MCF 10A (cell line): ENCODE measurements at regions of chr5 and their contacts with region 1.

Region 1: DNA sequence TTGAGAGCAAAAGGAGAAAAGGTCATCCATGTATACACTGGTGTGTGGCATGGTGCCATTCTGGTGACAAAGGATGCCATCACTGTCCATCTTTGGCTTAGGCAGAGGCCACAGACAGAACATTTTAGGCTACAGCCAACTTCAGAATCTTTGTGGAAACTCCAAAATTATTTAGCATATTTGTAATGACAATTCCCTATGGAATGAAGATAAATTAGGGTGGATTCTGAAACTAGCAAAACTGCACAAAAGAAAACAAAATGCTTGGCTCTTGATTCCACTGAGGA is 92.5 kb downstream of the FBXW11 start:
- DNase-seq: no peak
- H3K4me3 Mint-ChIP-seq: no peak overlapping the region
- H3K27ac Mint-ChIP-seq: no peak overlapping the region
- H3K4me1 Mint-ChIP-seq: peaks cover 27% of the 10 kb centered on the region
- H3K27me3 Mint-ChIP-seq: no peaks in the 10 kb centered on the region
- CTCF ChIP-seq: no peak

Region 2: DNA sequence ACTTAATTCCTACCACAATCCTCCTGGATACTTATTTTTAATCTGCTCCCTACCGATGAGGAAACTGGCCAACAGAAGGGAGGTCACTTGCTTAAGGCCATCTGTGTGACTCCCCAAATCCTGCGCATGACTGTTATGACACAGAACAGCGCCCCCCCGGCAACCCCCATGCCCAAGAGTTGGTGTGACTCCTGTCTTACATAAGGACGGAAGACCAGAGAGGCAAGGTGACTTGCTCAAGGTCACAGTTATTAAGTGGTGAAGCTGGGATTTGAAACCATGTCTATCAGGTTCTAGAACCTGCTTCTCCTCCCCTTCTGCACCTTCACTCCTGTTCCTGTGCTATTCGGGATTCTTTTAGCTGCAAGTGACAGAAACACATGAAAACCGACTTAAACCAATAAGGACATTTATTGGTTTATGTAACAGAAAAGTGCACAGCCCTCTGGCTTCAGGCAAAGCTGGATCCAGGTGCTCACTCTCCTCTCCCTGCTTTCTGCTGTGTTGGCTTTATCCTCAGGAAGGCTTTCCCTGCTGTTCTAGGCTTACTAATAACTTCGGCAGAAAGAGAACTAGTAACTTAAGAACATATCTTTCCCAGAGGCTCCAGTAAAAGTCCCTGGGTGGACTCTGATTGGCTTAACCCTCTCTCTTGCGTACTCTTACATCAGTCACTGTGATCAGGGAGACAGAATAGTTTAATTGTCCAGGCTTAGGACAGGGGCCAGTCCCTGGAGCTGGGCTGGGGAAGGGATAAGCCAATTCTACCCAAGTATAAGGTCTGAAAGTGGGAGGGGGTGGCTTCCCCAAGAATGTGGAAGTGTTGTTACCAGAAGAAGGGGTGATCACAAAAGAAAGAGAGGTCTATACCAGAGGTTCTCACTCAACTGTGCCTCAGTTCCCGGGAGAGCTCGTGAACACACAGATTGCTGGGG is 450.7 kb before region 1 on chr5:
- CTCF ChIA-PET with region 1: no interaction called
- POLR2A ChIA-PET with region 1: no interaction called
- intact Hi-C with region 1: no loop called
- DNase-seq: no peak
- H3K4me3 Mint-ChIP-seq: no peak overlapping the region
- H3K27ac Mint-ChIP-seq: no peak overlapping the region
- H3K4me1 Mint-ChIP-seq: no peaks in the 10 kb centered on the region
- H3K27me3 Mint-ChIP-seq: peaks cover 36% of the 10 kb centered on the region
- CTCF ChIP-seq: no peak

Region 3: DNA sequence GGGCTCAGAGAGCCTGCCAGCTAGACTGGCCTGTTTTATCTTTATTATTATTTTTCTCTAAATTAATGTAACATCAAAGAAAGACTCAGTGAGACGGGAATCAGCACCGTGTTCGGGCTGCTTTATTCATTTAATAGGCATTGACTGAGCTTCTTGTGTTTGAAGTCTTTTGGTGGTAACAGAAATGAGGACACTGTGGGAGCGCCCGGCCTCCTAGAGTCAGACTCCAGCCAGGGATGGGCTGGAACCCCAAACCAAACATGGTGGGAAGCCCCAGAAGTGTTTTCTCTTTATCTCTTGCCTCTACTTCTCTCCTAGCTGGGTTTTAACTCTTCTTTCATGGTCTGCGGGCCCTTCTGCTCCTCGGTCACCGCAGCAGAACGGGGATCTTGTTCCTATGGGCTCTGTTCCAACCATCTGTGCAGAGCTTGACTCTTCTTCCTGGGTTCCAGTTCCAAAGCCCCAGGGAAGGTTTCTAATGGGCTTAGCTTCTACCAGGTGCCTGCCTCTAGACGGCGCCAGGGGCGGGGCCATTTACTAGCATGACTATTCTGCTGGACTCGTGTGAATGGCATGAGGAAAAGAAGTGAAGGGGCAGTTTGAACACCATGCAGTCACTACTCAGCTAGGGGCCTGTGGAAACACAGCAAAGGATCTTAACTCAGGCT is 370.6 kb before region 1 on chr5:
- CTCF ChIA-PET with region 1: no interaction called
- POLR2A ChIA-PET with region 1: no interaction called
- intact Hi-C with region 1: no loop called
- DNase-seq: no peak
- H3K4me3 Mint-ChIP-seq: no peak overlapping the region
- H3K27ac Mint-ChIP-seq: no peak overlapping the region
- H3K4me1 Mint-ChIP-seq: no peaks in the 10 kb centered on the region
- H3K27me3 Mint-ChIP-seq: no peaks in the 10 kb centered on the region
- CTCF ChIP-seq: no peak

Region 4: DNA sequence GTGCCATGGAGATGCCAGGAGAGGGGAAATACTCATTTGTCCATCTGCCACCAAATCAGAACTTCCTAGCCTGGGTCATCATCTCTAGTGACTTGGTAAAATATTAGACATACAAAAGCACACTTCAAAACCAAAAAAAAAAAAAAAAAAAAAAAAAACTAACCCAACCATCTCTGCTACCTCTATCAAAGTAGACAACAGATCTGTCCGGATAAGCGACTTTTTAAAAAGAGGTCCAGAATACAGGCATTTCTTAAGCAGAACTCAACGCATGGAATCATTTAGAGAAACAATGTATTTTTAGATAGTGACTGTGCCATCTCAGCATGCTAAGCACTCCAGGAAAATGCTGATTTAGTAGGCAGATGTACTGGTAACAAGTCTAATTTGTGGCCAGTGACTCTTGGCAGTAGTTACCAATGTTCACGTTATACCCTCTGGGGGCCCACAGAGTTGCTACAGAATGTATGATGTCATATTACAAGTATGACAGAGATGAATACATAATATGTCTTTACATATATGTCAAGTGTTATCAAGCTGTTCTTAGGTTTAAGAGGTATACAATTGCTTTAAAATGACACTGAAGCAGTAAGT is 20.5 kb before region 1 on chr5:
- CTCF ChIA-PET with region 1: interaction called, 19 read pairs
- POLR2A ChIA-PET with region 1: interaction called, 3 read pairs
- intact Hi-C with region 1: no loop called
- DNase-seq: peak; percentile 8
- H3K4me3 Mint-ChIP-seq: no peak overlapping the region
- H3K27ac Mint-ChIP-seq: peak overlapping the region; percentile 8
- H3K4me1 Mint-ChIP-seq: no peaks in the 10 kb centered on the region
- H3K27me3 Mint-ChIP-seq: no peaks in the 10 kb centered on the region
- CTCF ChIP-seq: no peak

Region 5: DNA sequence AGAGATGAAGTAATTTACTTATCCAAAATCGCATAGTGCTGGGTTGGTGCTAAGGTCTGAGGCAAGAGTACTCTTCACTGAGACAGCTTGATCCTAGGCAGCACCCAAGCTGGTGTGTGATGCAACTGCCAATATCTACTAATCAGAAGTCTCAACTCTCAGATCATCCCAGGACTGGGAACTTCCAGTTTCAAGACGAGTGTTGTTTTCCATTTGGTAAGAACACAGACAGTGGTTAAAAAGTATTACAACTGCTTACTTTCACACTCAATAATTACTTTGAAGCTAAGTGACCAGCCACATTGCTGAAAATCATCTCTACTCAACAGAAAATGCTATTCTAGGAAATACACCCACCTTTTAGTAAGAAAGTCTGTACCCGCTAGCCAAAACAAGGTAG is 47.2 kb after region 1 on chr5:
- CTCF ChIA-PET with region 1: interaction called, 10 read pairs
- POLR2A ChIA-PET with region 1: interaction called, 3 read pairs
- intact Hi-C with region 1: no loop called
- DNase-seq: no peak
- H3K4me3 Mint-ChIP-seq: no peak overlapping the region
- H3K27ac Mint-ChIP-seq: no peak overlapping the region
- H3K4me1 Mint-ChIP-seq: peaks cover 31% of the 10 kb centered on the region
- H3K27me3 Mint-ChIP-seq: no peaks in the 10 kb centered on the region
- CTCF ChIP-seq: no peak

Region 6: GRCh38 chr5:172015346-172015745 is 101.4 kb after region 1 on chr5:
- CTCF ChIA-PET with region 1: interaction called, 153 read pairs
- POLR2A ChIA-PET with region 1: no interaction called
- intact Hi-C with region 1: no loop called
- DNase-seq: no peak
- H3K4me3 Mint-ChIP-seq: no peak overlapping the region
- H3K27ac Mint-ChIP-seq: no peak overlapping the region
- H3K4me1 Mint-ChIP-seq: no peaks in the 10 kb centered on the region
- H3K27me3 Mint-ChIP-seq: no peaks in the 10 kb centered on the region
- CTCF ChIP-seq: no peak

Region 7: DNA sequence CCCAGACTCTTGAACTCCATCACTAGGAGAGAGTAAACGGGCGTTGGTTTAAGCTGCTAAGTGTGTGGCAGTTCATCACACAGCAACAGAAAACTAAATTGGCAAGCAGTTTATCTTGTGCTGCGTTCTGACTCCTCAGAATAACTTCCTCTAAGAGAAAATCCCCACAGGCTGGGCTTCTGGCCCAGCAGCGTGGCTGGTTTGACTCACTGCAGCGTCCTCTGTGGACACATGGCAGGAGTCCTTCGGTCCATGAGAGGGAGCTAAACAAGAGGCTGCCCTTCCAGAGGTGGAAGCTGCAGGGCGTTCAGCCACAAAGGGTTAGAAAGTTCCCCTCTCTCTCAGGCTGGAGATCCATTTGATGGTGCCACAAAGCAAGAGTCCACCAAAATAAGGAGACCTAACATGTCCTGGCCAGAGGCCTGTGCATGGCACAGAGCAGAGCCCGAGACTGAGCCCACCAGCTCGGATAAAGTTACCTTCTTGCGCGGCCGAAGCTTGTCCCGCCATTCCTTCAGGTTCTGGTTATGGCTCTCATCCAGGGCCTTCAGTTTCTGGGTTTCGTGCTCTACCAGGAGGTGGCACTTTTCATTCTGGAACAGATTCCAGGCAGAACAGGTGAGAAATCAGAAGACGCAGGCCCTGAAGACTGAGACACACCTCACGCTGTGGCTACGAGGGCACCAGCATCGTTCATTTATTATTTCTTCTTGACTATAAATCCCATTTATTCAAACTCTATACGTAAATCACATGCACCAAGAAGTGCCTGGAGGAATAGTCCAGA is 138.7 kb after region 1 on chr5:
- CTCF ChIA-PET with region 1: interaction called, 19 read pairs
- POLR2A ChIA-PET with region 1: no interaction called
- intact Hi-C with region 1: no loop called
- DNase-seq: no peak
- H3K4me3 Mint-ChIP-seq: no peak overlapping the region
- H3K27ac Mint-ChIP-seq: no peak overlapping the region
- H3K4me1 Mint-ChIP-seq: no peaks in the 10 kb centered on the region
- H3K27me3 Mint-ChIP-seq: no peaks in the 10 kb centered on the region
- CTCF ChIP-seq: no peak

Region 8: DNA sequence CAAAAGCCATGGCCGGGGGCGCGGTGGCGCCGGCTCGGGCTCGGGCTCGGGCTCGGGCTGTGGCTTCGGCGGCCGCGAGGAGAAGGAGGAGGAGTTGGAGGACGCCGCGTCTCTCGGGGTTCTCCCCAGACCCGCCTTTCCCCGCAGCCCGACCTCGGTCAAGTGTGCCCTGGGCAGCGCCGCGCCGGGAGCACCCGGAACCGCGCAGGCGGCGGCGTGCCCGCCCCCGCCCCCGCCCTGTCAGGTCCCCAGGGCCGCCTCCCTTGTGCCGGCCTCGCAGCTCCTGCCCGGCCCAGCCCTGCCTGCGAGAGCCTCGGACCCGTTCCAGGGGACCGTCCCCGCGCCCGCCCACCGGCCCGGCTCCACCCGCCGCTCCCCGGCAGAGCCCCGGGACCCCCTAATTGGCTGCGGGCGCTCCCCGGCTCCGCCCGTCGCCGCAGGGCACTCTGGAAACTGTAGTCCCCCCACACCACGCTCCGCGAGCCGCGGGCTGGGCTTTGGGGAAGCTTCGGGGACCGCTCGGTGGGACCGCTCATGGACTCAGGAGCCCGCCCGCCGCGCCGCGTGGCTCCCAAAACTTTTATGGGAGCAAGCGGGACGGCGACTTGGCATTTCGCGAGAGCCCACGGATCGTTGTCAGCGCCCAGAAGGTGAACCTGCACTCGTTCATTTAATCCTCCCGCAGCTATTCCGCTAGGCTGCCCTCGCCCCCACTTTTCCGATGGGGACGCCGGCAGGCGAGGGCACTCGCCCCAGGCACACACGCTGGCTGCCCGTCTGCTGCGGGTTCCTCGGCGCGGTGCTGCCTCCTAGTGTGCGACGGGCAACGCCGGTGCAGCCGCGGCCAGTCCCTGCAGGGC is 274.3 kb after region 1 on chr5 and contains the start of gene STK10:
- CTCF ChIA-PET with region 1: interaction called, 44 read pairs
- POLR2A ChIA-PET with region 1: interaction called, 17 read pairs
- intact Hi-C with region 1: loop called (anchors 1 kb)
- DNase-seq: peak; percentile 95
- H3K4me3 Mint-ChIP-seq: peak within 1 kb of the TSS; percentile 87
- H3K27ac Mint-ChIP-seq: peak within 1 kb of the TSS; percentile 43
- H3K4me1 Mint-ChIP-seq: peaks cover 24% of the 10 kb centered on the region
- H3K27me3 Mint-ChIP-seq: no peaks in the 10 kb centered on the region
- CTCF ChIP-seq: peak; percentile 98
- total RNA-seq, gene STK10: 46.5 and 49.9 TPM in 2 replicates